CD8-positive, alpha-beta memory T cell (primary cell): ENCODE measurements at regions of chr6 and their contacts with region 1.

Region 1: DNA sequence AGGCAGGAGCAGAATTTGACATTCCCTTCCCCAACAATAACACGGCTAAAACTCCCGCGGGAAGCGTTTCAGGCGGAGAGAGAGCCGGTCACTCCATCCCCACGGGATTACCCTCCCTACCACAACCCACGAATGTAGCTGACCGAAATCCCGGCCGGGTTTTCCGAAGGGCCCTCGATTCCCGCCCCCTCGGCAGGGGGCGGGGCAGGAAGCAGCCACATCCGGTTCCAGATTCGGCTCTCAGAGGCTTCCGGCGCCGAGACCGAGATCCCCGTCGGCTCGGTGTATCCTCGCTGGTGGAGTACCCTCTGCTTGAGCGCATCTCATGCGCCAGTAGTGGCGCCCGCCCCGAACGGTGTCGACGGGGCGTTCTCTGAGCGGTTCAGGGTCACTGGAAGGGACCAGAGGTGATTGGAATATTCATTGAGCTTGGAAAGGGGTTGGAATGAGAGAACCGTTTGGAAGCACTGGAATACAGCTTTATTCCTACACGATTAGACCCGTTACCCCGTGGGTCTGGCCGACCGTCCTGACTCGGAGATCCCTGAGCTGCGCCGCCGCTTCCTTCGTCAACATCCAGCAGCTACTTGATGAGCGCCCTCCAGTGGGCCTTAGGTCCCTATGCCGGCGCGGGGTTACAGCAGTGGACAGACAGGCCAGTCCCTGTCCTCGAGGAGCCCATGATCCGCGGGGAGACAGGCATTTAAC is 649 bp upstream of the RGL2 start:
- DNase-seq: peak; percentile 88 to 95 (median 90)
- H3K4me3 ChIP-seq: peak overlapping the region; percentile 99
- H3K4me3 Mint-ChIP-seq: peak overlapping the region; percentile 98 to 100 (median 99)
- H3K27ac ChIP-seq: peak overlapping the region; percentile 89
- H3K27ac Mint-ChIP-seq: peak overlapping the region; percentile 94 to 100 (median 99)
- H3K4me1 ChIP-seq: peaks cover 11% of the 10 kb centered on the region
- H3K4me1 Mint-ChIP-seq: peaks cover 34 to 52% (median 36%) of the 10 kb centered on the region in 3 donors
- H3K27me3 ChIP-seq: no peaks in the 10 kb centered on the region
- H3K27me3 Mint-ChIP-seq: peaks cover 0 to 5% of the 10 kb centered on the region in 2 donors

Region 2: GRCh38 chr6:33271458-33272274 is 27.7 kb before region 1 on chr6 and contains the starts of genes RPS18 and VPS52:
- CTCF ChIA-PET with region 1: interaction called, 33 read pairs
- POLR2A ChIA-PET with region 1: interaction called, 22 read pairs
- DNase-seq: peak; percentile 83 to 97 (median 94)
- H3K4me3 ChIP-seq: peak within 1 kb of the TSS; percentile 79
- H3K4me3 Mint-ChIP-seq: peak within 1 kb of the TSS; percentile 98 to 100 (median 99)
- H3K27ac ChIP-seq: peak within 1 kb of the TSS; percentile 92
- H3K27ac Mint-ChIP-seq: peak within 1 kb of the TSS; percentile 98 to 100 (median 99)
- H3K4me1 ChIP-seq: peaks cover 49% of the 10 kb centered on the region
- H3K4me1 Mint-ChIP-seq: peaks cover 61 to 75% (median 73%) of the 10 kb centered on the region in 3 donors
- H3K27me3 ChIP-seq: no peaks in the 10 kb centered on the region
- H3K27me3 Mint-ChIP-seq: no peaks in the 10 kb centered on the region
- total RNA-seq, gene RPS18: 3,797 to 3,852 TPM
- total RNA-seq, gene VPS52: 57.2 to 58.5 TPM

Region 3: GRCh38 chr6:33276864-33277662 is 22.3 kb before region 1 on chr6 and contains the start of gene B3GALT4:
- CTCF ChIA-PET with region 1: interaction called, 33 read pairs
- POLR2A ChIA-PET with region 1: interaction called, 22 read pairs
- DNase-seq: peak; percentile 58 to 79 (median 73)
- H3K4me3 ChIP-seq: peak within 1 kb of the TSS; percentile 80
- H3K4me3 Mint-ChIP-seq: peak within 1 kb of the TSS; percentile 88 to 98 (median 89)
- H3K27ac ChIP-seq: peak within 1 kb of the TSS; percentile 68
- H3K27ac Mint-ChIP-seq: peak within 1 kb of the TSS; percentile 90 to 99 (median 94)
- H3K4me1 ChIP-seq: peaks cover 57% of the 10 kb centered on the region
- H3K4me1 Mint-ChIP-seq: peaks cover 61 to 92% (median 79%) of the 10 kb centered on the region in 3 donors
- H3K27me3 ChIP-seq: no peaks in the 10 kb centered on the region
- H3K27me3 Mint-ChIP-seq: no peaks in the 10 kb centered on the region
- total RNA-seq, gene B3GALT4: 6.1 to 7.0 TPM

Region 4: DNA sequence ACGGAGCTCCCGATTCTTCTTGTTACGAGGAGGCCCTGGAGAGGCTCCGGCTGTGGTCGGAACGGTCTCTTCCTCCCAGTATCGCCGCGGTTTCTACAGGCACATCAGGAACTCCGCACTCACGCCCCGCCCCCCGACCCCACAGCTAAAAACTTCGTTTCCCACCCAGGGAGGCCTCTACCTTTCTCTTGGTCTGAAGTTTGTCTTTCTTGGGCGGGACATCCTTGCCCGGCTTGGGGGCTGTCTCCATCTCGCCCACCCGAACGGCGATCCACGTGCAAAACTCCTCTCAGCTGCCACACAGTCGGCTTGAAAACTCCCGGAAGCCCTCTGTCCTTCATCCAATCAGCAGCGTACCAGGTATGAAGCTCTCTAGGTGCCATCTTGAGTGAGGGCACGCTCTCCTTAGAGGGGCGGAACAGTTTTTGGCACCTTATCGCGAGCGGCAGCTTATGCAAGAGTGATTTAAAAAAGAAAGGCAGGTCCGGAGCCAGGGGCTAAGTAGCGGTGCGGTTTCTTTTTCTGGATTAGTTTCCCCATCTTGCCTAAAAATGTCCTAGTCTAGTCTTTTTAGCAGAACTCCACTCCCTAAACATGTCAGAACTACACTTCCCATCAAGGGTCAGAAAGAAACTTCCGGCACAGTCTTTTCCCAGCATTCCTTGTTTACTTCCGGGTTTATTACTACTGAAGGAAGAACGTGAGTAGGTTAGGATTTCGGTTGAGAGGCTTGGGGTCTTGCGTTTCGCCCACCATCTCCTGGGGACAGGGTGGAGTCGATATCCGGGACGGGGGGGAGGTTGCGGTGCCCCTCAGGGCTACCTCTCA is 10.3 kb before region 1 on chr6 and contains the starts of genes PFDN6 and WDR46:
- CTCF ChIA-PET with region 1: interaction called, 6 read pairs
- POLR2A ChIA-PET with region 1: interaction called, 20 read pairs
- DNase-seq: peak; percentile 65 to 89 (median 84)
- H3K4me3 ChIP-seq: peak within 1 kb of the TSS; percentile 99
- H3K4me3 Mint-ChIP-seq: peak within 1 kb of the TSS; percentile 89 to 99 (median 97)
- H3K27ac ChIP-seq: peak within 1 kb of the TSS; percentile 83
- H3K27ac Mint-ChIP-seq: peak within 1 kb of the TSS; percentile 79 to 99 (median 96)
- H3K4me1 ChIP-seq: peaks cover 24% of the 10 kb centered on the region
- H3K4me1 Mint-ChIP-seq: peaks cover 37 to 52% (median 49%) of the 10 kb centered on the region in 3 donors
- H3K27me3 ChIP-seq: no peaks in the 10 kb centered on the region
- H3K27me3 Mint-ChIP-seq: no peaks in the 10 kb centered on the region
- total RNA-seq, gene PFDN6: 118 to 119 TPM
- total RNA-seq, gene WDR46: 112 to 117 TPM

Region 5: DNA sequence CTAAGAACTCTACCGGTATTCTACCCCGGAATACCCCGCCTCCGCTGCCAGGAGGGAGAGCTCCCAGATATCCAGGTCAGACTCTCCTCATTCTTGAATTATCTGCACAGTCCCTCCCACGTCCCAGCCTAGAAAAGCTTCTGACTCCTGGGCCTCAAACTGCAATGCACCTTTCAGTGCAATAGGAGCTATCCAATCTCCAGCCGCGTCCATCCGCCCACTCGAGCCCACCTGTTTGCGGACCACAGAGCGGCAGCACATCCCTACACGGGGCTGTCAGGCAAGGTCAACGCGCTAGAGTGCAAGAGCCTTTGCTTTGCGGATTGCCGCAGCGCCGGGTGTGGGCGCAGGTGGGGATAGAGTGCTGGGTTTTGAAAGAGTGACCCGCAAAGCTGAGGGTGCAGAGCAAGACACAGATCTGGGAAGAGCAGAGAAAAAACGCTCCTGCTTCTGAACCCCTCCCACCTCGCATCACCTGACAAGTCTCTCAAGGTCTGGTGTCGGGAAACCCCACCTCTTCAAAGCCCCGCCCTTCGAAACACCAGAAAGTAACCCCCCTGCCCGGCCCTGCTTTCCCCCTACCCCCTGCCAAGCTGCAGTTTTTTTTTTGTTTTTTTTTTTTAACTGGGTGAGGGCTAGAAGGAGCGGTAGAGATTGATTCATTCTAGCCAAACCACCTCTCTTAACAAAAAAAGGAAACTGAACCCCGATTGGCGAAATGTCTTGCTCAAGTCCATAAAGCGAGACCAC is 13.2 kb after region 1 on chr6:
- CTCF ChIA-PET with region 1: interaction called, 10 read pairs
- POLR2A ChIA-PET with region 1: interaction called, 30 read pairs
- DNase-seq: peak; percentile 76 to 91 (median 81)
- H3K4me3 ChIP-seq: peak overlapping the region; percentile 87
- H3K4me3 Mint-ChIP-seq: peak overlapping the region; percentile 95 to 100 (median 98)
- H3K27ac ChIP-seq: peak overlapping the region; percentile 98
- H3K27ac Mint-ChIP-seq: peak overlapping the region; percentile 95 to 100 (median 99)
- H3K4me1 ChIP-seq: peaks cover 37% of the 10 kb centered on the region
- H3K4me1 Mint-ChIP-seq: peaks cover 52 to 72% (median 60%) of the 10 kb centered on the region in 3 donors
- H3K27me3 ChIP-seq: no peaks in the 10 kb centered on the region
- H3K27me3 Mint-ChIP-seq: no peaks in the 10 kb centered on the region

Region 6: GRCh38 chr6:33317669-33318425 is 18.5 kb after region 1 on chr6 and contains the start of gene ZBTB22:
- CTCF ChIA-PET with region 1: interaction called, 10 read pairs
- POLR2A ChIA-PET with region 1: interaction called, 30 read pairs
- DNase-seq: peak; percentile 94 to 97 (median 96)
- H3K4me3 ChIP-seq: peak within 1 kb of the TSS; percentile 100
- H3K4me3 Mint-ChIP-seq: peak within 1 kb of the TSS; percentile 94 to 100 (median 100)
- H3K27ac ChIP-seq: peak within 1 kb of the TSS; percentile 72
- H3K27ac Mint-ChIP-seq: peak within 1 kb of the TSS; percentile 95 to 99 (median 98)
- H3K4me1 ChIP-seq: peaks cover 66% of the 10 kb centered on the region
- H3K4me1 Mint-ChIP-seq: peaks cover 71 to 84% (median 71%) of the 10 kb centered on the region in 3 donors
- H3K27me3 ChIP-seq: no peaks in the 10 kb centered on the region
- H3K27me3 Mint-ChIP-seq: peaks cover 0 to 3% of the 10 kb centered on the region in 2 donors
- total RNA-seq, gene ZBTB22: 6.9 to 7.8 TPM

Region 7: GRCh38 chr6:33535104-33535603 is 235.8 kb after region 1 on chr6:
- CTCF ChIA-PET with region 1: no interaction called
- POLR2A ChIA-PET with region 1: no interaction called
- DNase-seq: no peak
- H3K4me3 ChIP-seq: no peak overlapping the region
- H3K4me3 Mint-ChIP-seq: no peak overlapping the region
- H3K27ac ChIP-seq: no peak overlapping the region
- H3K27ac Mint-ChIP-seq: no peak overlapping the region
- H3K4me1 ChIP-seq: peaks cover 11% of the 10 kb centered on the region
- H3K4me1 Mint-ChIP-seq: peaks cover 26 to 27% (median 26%) of the 10 kb centered on the region in 3 donors
- H3K27me3 ChIP-seq: no peaks in the 10 kb centered on the region
- H3K27me3 Mint-ChIP-seq: no peaks in the 10 kb centered on the region